CD14-positive monocyte (primary cell): ENCODE measurements at regions of chr9 and their contacts with region 1.

Region 1: GRCh38 chr9:20884985-20885593 is 146.4 kb downstream of the HACD4 start:
- DNase-seq: peak; percentile 19 to 46 (median 41)
- H3K4me3 ChIP-seq: no peak overlapping the region
- H3K4me3 Mint-ChIP-seq: no peak overlapping the region
- H3K27ac ChIP-seq: no peak overlapping the region
- H3K27ac Mint-ChIP-seq: no peak overlapping the region
- H3K4me1 ChIP-seq: no peaks in the 10 kb centered on the region
- H3K4me1 Mint-ChIP-seq: no peaks in the 10 kb centered on the region
- H3K27me3 ChIP-seq: no peaks in the 10 kb centered on the region
- H3K27me3 Mint-ChIP-seq: no peaks in the 10 kb centered on the region
- CTCF ChIP-seq: peak; percentile 78

Region 2: GRCh38 chr9:21110708-21111576 is 225.9 kb after region 1 on chr9:
- intact Hi-C with region 1: loop called (anchors 5 to 10 kb)
- DNase-seq: peak; percentile 62 to 79 (median 77)
- H3K4me3 ChIP-seq: no peak overlapping the region
- H3K4me3 Mint-ChIP-seq: no peak overlapping the region
- H3K27ac ChIP-seq: no peak overlapping the region
- H3K27ac Mint-ChIP-seq: no peak overlapping the region
- H3K4me1 ChIP-seq: peaks cover 0 to under 1% of the 10 kb centered on the region in 2 donors
- H3K4me1 Mint-ChIP-seq: peaks cover 6% of the 10 kb centered on the region
- H3K27me3 ChIP-seq: no peaks in the 10 kb centered on the region
- H3K27me3 Mint-ChIP-seq: peaks cover 0 to 2% (median 0%) of the 10 kb centered on the region in 3 donors
- CTCF ChIP-seq: peak; percentile 87